ENCODE measurements at regions of chr17 and their contacts with region 1.

Region 1: DNA sequence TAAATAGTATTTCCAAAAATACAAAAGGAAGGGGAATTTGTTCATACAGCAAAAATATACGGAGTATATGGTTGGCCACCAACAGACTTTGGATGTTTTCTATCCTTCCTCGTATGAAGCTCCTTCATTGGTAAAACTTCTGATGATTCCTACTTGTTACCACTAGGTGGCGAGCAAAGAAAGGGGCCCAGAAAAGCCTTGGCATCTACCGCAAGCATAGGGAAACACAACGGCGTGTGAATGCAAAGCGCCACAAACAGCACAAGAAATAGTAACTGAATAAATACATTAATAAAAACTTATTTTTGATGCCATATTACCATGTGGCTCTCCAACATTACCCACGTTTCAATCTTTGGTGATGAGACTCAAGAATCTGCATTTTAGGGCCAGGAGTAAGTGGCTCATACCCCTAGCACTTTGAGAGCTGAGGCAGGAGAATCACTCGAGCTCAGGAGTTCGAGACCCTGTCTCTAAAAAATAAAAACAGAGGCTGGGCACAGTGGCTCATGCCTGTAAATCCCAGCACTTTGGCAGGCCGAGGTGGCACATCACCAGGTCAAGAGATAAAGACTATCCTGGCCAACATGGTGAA is 34.5 kb downstream of the YWHAE start:
- DNase-seq: no peak
- H3K4me3 ChIP-seq: peak overlapping the region in 3 of 4 donors; percentile 1 to 28 (median 18)
- H3K27ac ChIP-seq: peak overlapping the region in 3 of 4 donors; percentile 50 to 70 (median 64)
- H3K4me1 ChIP-seq: peaks cover 76 to 99% (median 98%) of the 10 kb centered on the region in 4 donors
- H3K27me3 ChIP-seq: no peaks in the 10 kb centered on the region
- CTCF ChIP-seq: peak; percentile 86 to 90 (median 87)
- EP300 ChIP-seq: no peak
- POLR2A ChIP-seq: no peak

Region 2: GRCh38 chr17:1399679-1400512 is 34.4 kb after region 1 on chr17 and contains the start of gene YWHAE:
- intact Hi-C with region 1: loop called (anchors 2 kb)
- DNase-seq: peak; percentile 99
- H3K4me3 ChIP-seq: peak within 1 kb of the TSS; percentile 72 to 88 (median 84)
- H3K27ac ChIP-seq: peak within 1 kb of the TSS; percentile 95 to 98 (median 96)
- H3K4me1 ChIP-seq: peaks cover 39 to 49% (median 45%) of the 10 kb centered on the region in 4 donors
- H3K27me3 ChIP-seq: no peaks in the 10 kb centered on the region
- CTCF ChIP-seq: no peak
- EP300 ChIP-seq: no peak
- POLR2A ChIP-seq: peak; percentile 92
- total RNA-seq, gene YWHAE: 329 to 408 (median 364) TPM

Region 3: DNA sequence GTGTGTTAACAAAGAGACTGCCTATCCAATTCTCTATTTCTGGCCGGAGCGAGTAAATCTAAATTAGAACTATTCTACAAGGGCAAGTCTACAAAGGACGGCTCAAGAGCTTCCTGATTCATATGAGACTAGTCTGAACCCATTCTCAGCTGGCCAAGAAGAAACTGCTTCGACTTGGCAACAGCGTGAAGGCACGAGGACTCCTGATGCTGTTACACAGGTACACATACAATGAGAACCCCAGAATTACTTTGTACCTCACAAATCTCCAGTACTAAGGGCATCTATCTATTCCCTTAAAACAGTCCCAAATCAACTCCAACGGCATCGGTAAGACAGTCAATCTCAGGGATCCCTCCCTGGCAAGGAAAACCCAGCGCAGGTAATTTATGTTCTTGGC is 89.0 kb after region 1 on chr17:
- intact Hi-C with region 1: loop called (anchors 5 kb)
- DNase-seq: no peak
- H3K4me3 ChIP-seq: peak overlapping the region; percentile 71 to 88 (median 84)
- H3K27ac ChIP-seq: peak overlapping the region; percentile 90 to 99 (median 90)
- H3K4me1 ChIP-seq: peaks cover 39 to 59% (median 56%) of the 10 kb centered on the region in 4 donors
- H3K27me3 ChIP-seq: no peaks in the 10 kb centered on the region
- CTCF ChIP-seq: no peak
- EP300 ChIP-seq: no peak
- POLR2A ChIP-seq: no peak

Region 4: DNA sequence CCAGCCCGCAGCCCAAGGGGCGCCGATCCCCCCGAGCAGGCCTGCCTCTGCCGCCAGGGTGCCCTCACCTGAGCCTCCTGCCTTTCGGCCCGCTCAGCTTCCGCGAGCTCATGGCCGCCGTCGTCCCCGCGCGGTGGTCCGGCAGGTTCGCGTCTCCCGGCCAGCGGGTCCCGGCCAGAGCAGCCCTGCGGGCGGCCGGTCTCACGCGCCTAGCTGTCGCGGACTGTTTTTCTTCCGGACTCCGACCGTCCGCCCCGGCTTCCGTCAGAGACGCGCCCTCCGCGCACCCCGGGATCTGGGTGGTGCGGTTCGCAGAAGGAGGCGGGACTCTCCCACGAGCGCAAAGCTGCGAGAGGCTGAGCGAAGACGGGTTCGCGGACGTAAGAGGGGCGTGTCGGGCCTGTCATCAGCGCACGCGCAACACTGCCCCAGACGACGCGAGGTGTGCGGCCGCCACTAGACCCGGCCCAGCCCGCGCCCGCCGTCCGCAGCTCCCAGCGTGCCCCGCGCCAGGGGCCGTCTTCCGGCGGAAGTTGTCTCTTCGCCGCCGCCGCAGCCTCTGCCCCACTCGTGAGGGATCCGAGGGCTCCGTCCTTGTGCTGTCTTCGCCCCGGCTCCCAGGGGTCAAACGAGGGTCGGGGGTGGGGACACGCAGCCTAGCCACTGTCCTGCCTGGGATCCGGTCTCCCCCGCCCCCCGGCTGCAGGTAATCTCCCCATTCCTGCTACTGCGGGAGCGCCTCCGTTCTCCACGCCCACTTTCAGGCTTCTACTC is 151.0 kb after region 1 on chr17 and contains the start of gene INPP5K:
- intact Hi-C with region 1: loop called (anchors 5 kb)
- DNase-seq: peak; percentile 99
- H3K4me3 ChIP-seq: peak within 1 kb of the TSS; percentile 84 to 94 (median 90)
- H3K27ac ChIP-seq: peak within 1 kb of the TSS; percentile 94 to 98 (median 96)
- H3K4me1 ChIP-seq: peaks cover 46 to 56% (median 54%) of the 10 kb centered on the region in 4 donors
- H3K27me3 ChIP-seq: no peaks in the 10 kb centered on the region
- CTCF ChIP-seq: peak in 1 of 3 experiments; percentile 4
- EP300 ChIP-seq: no peak
- POLR2A ChIP-seq: peak; percentile 56
- total RNA-seq, gene INPP5K: 62.0 to 89.3 (median 76.1) TPM